ENCODE measurements at regions of chr10 and their contacts with region 1.

Region 1: DNA sequence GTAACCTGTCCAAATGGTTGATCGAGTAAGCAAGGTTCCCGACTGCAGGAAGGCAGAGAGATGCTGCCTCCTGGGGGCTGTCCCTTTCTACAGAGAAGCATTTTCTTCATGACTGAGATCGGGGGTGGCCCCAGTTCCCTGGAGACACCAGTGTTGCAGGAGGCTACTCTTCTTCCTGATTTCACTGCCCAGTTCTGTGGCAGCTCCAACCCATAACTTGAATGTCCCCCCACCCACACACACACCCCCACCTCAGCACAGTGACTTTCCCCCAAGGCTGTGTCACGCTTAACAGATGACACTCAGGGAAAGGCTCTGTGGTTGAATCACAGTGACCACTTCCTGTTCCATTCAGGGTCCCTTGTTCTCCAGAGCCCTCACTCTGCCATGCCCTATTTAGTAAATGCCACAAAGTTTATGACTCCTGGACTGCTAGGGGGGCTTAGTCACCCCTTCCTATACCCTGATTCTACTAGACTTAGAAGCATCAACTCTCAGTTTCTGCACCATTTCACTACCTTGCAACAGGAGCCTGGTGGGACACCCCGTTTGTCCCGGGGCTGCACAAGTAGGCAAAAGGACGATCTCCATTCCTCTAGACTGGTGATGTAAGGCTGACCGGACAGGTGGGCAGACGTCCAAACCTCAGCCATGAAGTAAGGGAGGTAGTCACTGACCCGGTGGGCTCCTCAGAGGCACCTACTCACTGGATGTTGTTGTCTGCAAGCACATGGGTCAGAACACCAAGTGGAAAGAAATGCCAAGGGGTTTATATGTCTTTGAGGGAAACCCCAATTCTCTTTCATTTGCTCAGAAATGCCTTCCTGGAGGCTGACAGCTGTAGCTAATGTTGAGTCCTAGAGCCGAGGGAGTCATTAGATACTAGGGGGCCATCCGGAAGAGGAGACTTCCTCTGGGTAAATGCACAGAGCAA is 31.3 kb upstream of the SMC3 start:
- DNase-seq: peak; percentile 81

Region 2: GRCh38 chr10:110336111-110336721 is 200.0 kb before region 1 on chr10:
- in situ Hi-C with region 1: no loop called
- DNase-seq: no peak

Region 3: GRCh38 chr10:110354322-110354766 is 181.9 kb before region 1 on chr10:
- in situ Hi-C with region 1: loop called (anchors 25 kb)
- DNase-seq: peak; percentile 78

Region 4: DNA sequence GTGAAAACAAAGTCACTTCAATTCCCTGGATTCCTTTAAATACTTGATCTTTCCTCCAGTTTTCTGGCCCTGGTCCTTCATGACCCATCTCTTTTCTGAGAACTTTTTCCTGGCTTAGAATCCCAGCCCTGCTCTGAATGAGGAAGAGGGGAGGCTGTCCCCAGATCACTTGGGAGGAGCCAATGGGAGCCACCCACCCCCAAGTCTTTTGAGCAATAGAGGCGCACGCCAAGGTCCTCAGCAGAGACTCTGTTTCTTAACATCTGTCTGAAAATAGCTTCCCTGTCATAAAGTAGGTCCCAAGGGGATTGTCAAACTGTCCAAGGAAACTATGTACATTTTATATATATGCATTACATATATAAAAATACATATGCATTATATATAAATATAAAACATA is 667.4 kb after region 1 on chr10:
- in situ Hi-C with region 1: no loop called
- DNase-seq: no peak